Breast epithelium (tissue), 4 donors: ENCODE measurements at regions of chr1 and their contacts with region 1.

Region 1: GRCh38 chr1:58136387-58136786 is 410.1 kb downstream of the OMA1 start:
- DNase-seq: no peak
- H3K4me3 ChIP-seq: no peak overlapping the region
- H3K27ac ChIP-seq: no peak overlapping the region
- H3K4me1 ChIP-seq: no peaks in the 10 kb centered on the region
- H3K27me3 ChIP-seq: no peaks in the 10 kb centered on the region
- CTCF ChIP-seq: no peak
- POLR2A ChIP-seq: no peak

Region 2: DNA sequence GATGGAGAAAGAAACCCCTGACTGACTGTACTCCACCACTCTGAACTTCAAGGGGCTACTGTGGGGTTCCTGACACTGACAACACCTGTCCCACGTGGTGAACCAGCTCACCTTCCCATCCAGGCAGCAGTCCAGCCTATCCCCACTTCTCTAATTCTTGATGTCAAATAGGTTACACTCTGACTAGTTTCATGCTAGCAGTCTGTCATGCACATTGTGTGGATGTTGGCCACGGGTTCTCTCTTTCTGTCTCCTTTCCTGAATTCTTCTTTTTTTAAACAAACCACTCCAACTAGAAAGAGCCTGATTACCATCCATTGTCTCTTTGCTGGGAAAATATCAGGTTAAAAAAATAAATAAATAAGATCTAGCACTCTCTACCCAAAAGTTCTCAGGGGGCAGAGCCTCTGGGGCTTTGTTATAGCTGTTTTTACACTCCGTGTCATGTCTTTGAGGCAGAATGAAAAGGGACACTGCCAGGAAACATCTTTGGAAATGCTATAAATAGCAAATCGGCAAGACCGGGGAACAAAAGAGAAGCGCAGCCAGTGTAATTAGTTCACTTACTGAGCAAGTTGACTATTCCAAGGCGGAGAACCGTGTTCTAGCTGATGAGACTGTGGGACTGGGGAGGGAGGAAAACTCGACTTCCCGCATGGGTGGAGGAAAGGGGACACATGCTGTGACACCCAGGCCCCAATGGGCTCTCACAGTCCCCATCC is 54.0 kb after region 1 on chr1:
- intact Hi-C with region 1: loop called (anchors 2 kb)
- DNase-seq: no peak
- H3K4me3 ChIP-seq: no peak overlapping the region
- H3K27ac ChIP-seq: no peak overlapping the region
- H3K4me1 ChIP-seq: no peaks in the 10 kb centered on the region
- H3K27me3 ChIP-seq: no peaks in the 10 kb centered on the region
- CTCF ChIP-seq: no peak
- POLR2A ChIP-seq: no peak